HepG2 (cell line): ENCODE measurements at regions of chr3 and their contacts with region 1.

Region 1: GRCh38 chr3:41198950-41199865 is at the start of gene CTNNB1:
- DNase-seq: peak; percentile 71
- ATAC-seq: peak; percentile 86
- H3K4me3 ChIP-seq: peak within 1 kb of the TSS; percentile 98 to 100 (median 99)
- H3K27ac ChIP-seq: peak within 1 kb of the TSS; percentile 93
- H3K4me1 ChIP-seq: peaks cover 26% of the 10 kb centered on the region
- H3K27me3 ChIP-seq: peaks cover 0 to 5% of the 10 kb centered on the region in 2 experiments; a peak in 1 of 5 replicates
- CTCF ChIP-seq: no peak
- EP300 ChIP-seq: peak in 1 of 2 experiments; percentile 62; a peak in 3 of 4 replicates
- POLR2A ChIP-seq: peak; percentile 93 to 96
- RAD21 ChIP-seq: peak; percentile 68
- total RNA-seq, gene CTNNB1: 489 and 700 TPM in 2 replicates

Region 2: GRCh38 chr3:40719660-40720287 is 479.4 kb before region 1 on chr3:
- CTCF ChIA-PET with region 1: no interaction called
- POLR2A ChIA-PET with region 1: interaction called, 6 read pairs
- in situ Hi-C with region 1: no loop called
- intact Hi-C with region 1: loop called (anchors 10 kb)
- DNase-seq: peak; percentile 59
- ATAC-seq: peak; percentile 54
- H3K4me3 ChIP-seq: peak overlapping the region in 2 of 3 experiments; percentile 28 to 30; a peak in 2 of 6 replicates
- H3K27ac ChIP-seq: no peak overlapping the region
- H3K4me1 ChIP-seq: peaks cover 16% of the 10 kb centered on the region
- H3K27me3 ChIP-seq: peaks cover 0 to 1% of the 10 kb centered on the region in 2 experiments; a peak in 1 of 5 replicates
- CTCF ChIP-seq: peak; percentile 79
- EP300 ChIP-seq: no peak
- POLR2A ChIP-seq: no peak
- RAD21 ChIP-seq: no peak

Region 3: DNA sequence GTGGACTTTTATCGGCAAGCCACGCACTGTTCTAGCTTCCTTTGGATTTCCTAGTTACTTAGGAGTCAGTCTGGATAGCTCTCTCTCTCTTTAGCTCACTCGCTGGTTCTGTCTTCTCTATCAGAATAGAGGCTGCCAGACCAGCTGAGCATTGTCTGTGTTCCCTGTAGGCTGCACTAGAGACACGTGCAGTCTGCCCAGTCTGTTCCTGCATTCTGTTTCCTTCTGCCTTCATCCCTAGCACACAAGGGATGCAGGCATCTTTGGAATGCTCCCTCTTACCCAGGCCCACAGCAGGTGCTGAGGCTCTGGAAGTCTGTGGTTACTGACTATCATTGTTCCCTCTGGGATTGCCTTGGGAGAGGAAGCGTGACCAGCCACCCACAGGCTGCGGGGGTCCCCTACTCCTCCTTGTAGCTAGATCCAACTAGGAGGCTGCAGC is 351.6 kb before region 1 on chr3:
- CTCF ChIA-PET with region 1: no interaction called
- POLR2A ChIA-PET with region 1: interaction called, 6 read pairs
- in situ Hi-C with region 1: no loop called
- intact Hi-C with region 1: loop called (anchors 10 kb)
- DNase-seq: peak; percentile 29
- ATAC-seq: peak; percentile 58
- H3K4me3 ChIP-seq: no peak overlapping the region
- H3K27ac ChIP-seq: no peak overlapping the region
- H3K4me1 ChIP-seq: peaks cover 72% of the 10 kb centered on the region
- H3K27me3 ChIP-seq: no peaks in the 10 kb centered on the region
- CTCF ChIP-seq: peak; percentile 63
- EP300 ChIP-seq: no peak
- POLR2A ChIP-seq: no peak
- RAD21 ChIP-seq: no peak

Region 4: GRCh38 chr3:41117398-41117870 is 81.8 kb before region 1 on chr3:
- CTCF ChIA-PET with region 1: no interaction called
- POLR2A ChIA-PET with region 1: interaction called, 26 read pairs
- in situ Hi-C with region 1: no loop called
- intact Hi-C with region 1: no loop called
- DNase-seq: peak; percentile 95
- ATAC-seq: peak; percentile 87
- H3K4me3 ChIP-seq: peak overlapping the region in 2 of 3 experiments; percentile 34 to 55; a peak in 5 of 6 replicates
- H3K27ac ChIP-seq: peak overlapping the region; percentile 46
- H3K4me1 ChIP-seq: peaks cover 52% of the 10 kb centered on the region
- H3K27me3 ChIP-seq: peaks cover 0 to 3% of the 10 kb centered on the region in 2 experiments; a peak in 1 of 5 replicates
- CTCF ChIP-seq: peak; percentile 28; the same call in 1 of the 2 replicates
- EP300 ChIP-seq: peak in 1 of 2 experiments; percentile 15; a peak in 1 of 4 replicates
- POLR2A ChIP-seq: no peak
- RAD21 ChIP-seq: no peak

Region 5: GRCh38 chr3:41188268-41188667 is 10.9 kb before region 1 on chr3:
- CTCF ChIA-PET with region 1: no interaction called
- POLR2A ChIA-PET with region 1: no interaction called
- in situ Hi-C with region 1: no loop called
- intact Hi-C with region 1: no loop called
- DNase-seq: no peak
- ATAC-seq: no peak
- H3K4me3 ChIP-seq: no peak overlapping the region
- H3K27ac ChIP-seq: no peak overlapping the region
- H3K4me1 ChIP-seq: peaks cover 16% of the 10 kb centered on the region
- H3K27me3 ChIP-seq: peaks cover 0 to 8% of the 10 kb centered on the region in 2 experiments; a peak in 1 of 5 replicates
- CTCF ChIP-seq: no peak
- EP300 ChIP-seq: no peak
- POLR2A ChIP-seq: no peak
- RAD21 ChIP-seq: no peak

Region 6: GRCh38 chr3:41247055-41248004 is 48.1 kb after region 1 on chr3:
- CTCF ChIA-PET with region 1: no interaction called
- POLR2A ChIA-PET with region 1: interaction called, 13 read pairs
- in situ Hi-C with region 1: no loop called
- intact Hi-C with region 1: no loop called
- DNase-seq: peak; percentile 95
- ATAC-seq: peak; percentile 68
- H3K4me3 ChIP-seq: no peak overlapping the region; a peak in 1 of 6 replicates
- H3K27ac ChIP-seq: peak overlapping the region; percentile 48
- H3K4me1 ChIP-seq: peaks cover 53% of the 10 kb centered on the region
- H3K27me3 ChIP-seq: no peaks in the 10 kb centered on the region
- CTCF ChIP-seq: no peak
- EP300 ChIP-seq: peak in 1 of 2 experiments; percentile 90; a peak in 3 of 4 replicates
- POLR2A ChIP-seq: no peak
- RAD21 ChIP-seq: no peak